Activated CD4-positive, alpha-beta T cell treated with anti-CD3 and anti-CD28 coated beads for 36 hours (primary cell): ENCODE measurements at regions of chr20 and their contacts with region 1.

Region 1: DNA sequence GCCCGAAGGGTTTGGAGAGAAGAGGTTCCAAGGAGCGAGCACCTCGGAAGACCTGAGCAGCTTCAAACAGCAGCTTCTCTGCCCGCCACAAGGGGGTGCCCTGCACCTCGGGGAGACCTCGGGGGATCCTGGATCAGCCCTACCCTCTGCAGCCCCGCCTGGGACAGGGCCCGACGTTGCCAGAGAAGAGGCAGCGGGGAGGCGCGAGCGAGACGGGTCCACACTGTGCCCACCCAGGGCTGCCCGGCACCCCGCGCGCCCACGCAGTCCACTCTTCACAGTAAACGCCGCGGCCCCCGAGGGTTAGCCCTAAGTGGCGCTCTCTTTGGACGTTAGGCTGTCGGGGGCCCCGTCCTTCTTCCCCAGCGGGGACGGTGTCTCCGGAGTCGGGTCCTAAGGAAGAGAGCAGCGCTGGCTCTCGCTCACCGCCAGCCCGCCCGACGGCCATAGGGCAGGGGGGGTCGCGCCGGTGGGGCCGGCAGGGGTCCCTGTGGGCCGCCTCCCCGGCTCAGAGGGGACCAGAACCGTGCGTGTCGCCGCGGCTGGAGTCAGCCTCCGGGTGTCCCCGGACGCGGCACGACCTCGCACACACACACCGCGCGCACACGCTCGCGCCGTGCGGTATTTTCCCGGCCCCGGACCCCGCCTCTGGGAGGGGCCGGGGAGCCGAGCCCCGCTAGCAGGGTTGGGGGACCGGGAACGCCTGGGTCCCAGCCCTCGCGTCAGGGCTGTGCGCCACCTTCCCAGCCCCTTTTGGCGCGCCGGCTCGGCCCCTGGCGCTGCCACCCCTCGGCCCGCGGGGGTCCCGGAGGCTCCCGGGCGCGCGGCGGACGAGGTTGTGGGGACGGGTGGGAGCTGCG is 929 bp downstream of the CDH22 start:
- DNase-seq: peak; percentile 87
- ATAC-seq: peak; percentile 90
- H3K4me3 Mint-ChIP-seq: no peak overlapping the region
- H3K27ac Mint-ChIP-seq: no peak overlapping the region
- H3K4me1 Mint-ChIP-seq: peaks cover 8% of the 10 kb centered on the region
- H3K27me3 Mint-ChIP-seq: peaks cover 61% of the 10 kb centered on the region

Region 2: DNA sequence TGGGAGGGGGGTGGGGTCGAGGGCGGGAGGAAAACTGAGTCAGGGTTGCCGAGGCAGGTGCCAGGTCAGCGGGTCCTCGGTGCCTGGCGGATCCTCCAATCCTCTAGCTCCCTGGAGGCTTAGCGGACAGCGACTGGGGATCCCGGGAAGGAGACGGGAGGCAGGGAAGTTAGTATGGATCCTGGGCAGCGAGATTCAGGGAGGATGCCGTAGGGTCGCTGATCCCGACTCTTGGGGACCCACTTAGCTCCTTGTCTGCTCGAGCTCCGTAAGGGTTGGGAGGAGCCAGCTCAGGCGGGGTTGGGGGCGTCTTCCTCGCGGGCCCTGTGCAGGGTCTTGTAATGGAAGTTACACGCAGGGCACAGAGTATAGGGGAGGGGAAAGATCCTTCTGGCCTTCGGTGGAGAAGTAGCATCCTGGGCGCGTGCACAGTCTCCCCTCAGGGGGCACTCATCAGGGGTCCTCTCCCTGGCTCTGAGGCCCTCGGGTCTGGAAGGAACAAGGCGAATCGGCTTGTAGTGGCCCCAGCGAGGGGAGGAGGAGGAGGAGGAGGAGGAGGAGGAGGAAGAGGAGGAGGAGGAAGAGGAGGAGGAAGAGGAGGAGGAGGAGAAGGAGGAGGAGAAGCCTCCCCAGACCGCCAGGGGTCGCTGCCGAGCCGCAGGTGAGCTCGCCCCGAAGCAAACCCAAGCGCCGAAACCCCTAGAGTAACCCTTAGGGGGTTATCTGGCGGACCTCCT is 284.8 kb before region 1 on chr20:
- CTCF ChIA-PET with region 1: interaction called, 3 read pairs
- POLR2A ChIA-PET with region 1: no interaction called
- intact Hi-C with region 1: loop called in 1 of 2 experiments (anchors 5 kb)
- DNase-seq: peak; percentile 88
- ATAC-seq: peak; percentile 60
- H3K4me3 Mint-ChIP-seq: peak overlapping the region; percentile 57
- H3K27ac Mint-ChIP-seq: no peak overlapping the region
- H3K4me1 Mint-ChIP-seq: peaks cover 17% of the 10 kb centered on the region
- H3K27me3 Mint-ChIP-seq: peaks cover 29% of the 10 kb centered on the region

Region 3: DNA sequence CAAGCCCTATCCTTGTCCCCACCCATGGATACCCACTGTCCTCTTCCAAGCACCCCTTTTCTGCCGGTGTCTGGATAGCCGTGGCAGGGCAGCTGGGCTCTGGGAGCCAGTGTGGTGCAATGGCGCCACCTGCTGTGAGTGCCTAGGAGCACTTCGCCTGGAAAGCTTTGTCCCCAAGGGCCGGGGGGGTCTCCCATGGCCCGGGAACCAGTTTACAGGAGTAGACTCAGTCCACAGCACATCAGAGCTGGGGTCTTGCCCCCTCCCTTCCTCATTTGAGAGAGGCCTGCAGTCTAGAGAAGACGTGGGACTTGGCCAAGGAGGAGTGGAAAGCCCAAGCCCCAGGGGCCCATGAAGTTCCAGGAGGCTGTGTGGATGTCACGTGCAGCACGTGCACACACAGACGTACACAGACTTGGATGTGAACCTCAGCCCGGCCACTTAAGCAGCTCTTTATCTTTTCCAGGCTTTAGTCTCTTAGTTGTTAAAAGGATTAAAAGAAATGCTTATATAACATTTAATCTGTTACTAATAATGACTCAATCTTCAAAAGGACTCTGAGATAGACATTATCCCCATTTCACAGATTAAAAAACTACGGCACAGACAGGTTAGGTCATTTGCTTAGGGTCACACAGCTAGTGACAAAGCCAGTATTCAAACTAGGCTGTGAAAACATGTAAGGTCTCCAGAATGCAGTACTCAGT is 41.8 kb after region 1 on chr20:
- CTCF ChIA-PET with region 1: interaction called, 14 read pairs
- POLR2A ChIA-PET with region 1: no interaction called
- intact Hi-C with region 1: loop called (anchors 1 to 2 kb)
- DNase-seq: peak; percentile 75
- ATAC-seq: peak; percentile 60
- H3K4me3 Mint-ChIP-seq: no peak overlapping the region
- H3K27ac Mint-ChIP-seq: no peak overlapping the region
- H3K4me1 Mint-ChIP-seq: peaks cover 16% of the 10 kb centered on the region
- H3K27me3 Mint-ChIP-seq: no peaks in the 10 kb centered on the region

Region 4: DNA sequence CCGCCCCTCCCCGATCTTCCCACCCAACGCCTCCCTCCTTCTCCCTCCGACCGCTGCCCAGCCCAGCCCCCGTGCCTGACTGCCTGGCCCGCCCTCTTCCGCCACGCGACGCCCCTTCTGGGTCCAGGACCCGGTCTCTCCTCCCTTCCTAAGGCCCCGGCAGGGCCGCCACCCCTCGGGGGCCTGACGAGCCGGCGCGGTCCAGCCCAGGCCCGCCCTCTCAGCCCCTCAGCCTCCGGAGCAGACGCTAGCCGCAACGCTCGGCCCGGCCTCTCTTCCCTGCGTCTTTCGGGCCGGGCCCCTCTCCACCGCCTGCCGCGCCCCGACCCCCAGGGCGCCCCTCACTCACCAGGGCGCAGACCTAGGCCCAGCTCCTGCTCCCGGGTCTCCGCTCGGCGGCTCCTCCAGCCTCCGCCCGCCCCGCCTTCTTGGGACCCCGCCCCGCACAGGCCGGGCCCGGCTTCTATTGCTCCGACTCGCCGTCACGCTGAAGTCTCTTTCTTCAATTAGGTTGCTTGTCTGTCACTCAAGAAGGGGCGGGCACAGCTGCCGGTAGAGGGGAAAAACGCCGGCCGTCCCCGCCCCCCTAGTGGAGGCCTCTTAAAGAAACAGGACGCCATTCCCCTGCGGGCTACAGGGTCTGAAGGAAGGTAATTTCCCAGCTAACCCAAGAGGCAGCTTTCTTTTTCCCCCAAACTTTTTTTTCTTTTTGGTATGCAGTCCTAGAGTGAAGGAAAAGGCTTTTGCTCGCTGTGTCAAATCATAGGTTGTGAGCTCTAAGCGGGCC is 99.0 kb after region 1 on chr20 and contains the start of gene ELMO2:
- CTCF ChIA-PET with region 1: interaction called, 7 read pairs
- POLR2A ChIA-PET with region 1: no interaction called
- intact Hi-C with region 1: loop called (anchors 1 kb)
- DNase-seq: peak; percentile 98
- ATAC-seq: peak; percentile 85
- H3K4me3 Mint-ChIP-seq: peak within 1 kb of the TSS; percentile 88
- H3K27ac Mint-ChIP-seq: peak within 1 kb of the TSS; percentile 85
- H3K4me1 Mint-ChIP-seq: peaks cover 65% of the 10 kb centered on the region
- H3K27me3 Mint-ChIP-seq: no peaks in the 10 kb centered on the region
- total RNA-seq, gene ELMO2: 47.4 to 54.6 TPM

Region 5: DNA sequence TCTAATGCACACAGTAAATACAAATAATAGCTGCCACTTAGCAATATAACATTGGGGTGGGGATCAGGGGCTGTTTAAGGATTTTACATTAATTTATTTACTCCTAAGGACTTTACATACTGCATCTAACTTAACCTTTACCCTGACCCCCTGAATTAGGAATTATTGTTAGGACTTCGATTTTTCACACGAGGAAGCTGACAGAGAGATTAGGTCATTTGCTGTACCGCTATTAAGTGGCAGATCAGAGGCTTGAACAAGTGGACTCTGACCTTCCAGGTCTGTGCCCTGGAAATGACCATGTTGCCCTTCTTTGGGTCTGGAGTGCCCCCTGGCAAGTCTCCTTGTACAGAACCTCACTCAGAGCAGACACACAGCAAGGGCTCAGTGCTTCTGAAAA is 104.3 kb after region 1 on chr20:
- CTCF ChIA-PET with region 1: interaction called, 7 read pairs
- POLR2A ChIA-PET with region 1: no interaction called
- intact Hi-C with region 1: loop called (anchors 1 kb)
- DNase-seq: no peak
- ATAC-seq: no peak
- H3K4me3 Mint-ChIP-seq: no peak overlapping the region
- H3K27ac Mint-ChIP-seq: no peak overlapping the region
- H3K4me1 Mint-ChIP-seq: peaks cover 28% of the 10 kb centered on the region
- H3K27me3 Mint-ChIP-seq: peaks cover 7% of the 10 kb centered on the region

Region 6: DNA sequence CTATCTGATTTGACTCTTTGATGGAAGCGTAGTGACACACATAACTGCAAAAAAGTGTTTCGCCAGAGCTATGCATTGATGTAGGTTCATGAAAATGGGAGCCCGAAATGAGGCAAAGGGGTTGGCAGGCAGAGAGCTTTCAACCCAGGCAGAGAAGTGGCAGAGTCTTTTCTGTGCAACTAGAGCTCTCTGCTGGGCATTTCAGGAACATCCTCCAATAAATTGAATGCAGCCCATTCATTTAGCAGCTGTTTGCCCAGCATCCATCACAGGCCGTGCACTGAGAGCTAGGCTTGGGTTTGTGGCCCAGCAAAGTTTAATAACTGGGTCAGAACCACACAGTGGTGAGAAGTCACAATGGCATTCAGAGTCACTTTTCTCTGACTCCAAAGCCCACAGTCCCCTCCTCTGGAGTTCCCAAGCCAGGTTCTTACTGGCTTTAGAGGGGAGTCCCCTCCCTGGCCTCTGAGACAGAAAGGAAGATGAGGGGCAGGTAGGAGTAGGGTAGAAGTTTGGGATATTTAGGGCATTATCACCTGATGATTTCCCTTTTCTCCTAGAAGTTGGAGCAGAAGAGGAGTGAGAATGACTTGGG is 130.9 kb after region 1 on chr20:
- CTCF ChIA-PET with region 1: interaction called, 19 read pairs
- POLR2A ChIA-PET with region 1: no interaction called
- intact Hi-C with region 1: loop called (anchors 1 kb)
- DNase-seq: peak; percentile 28
- ATAC-seq: peak; percentile 44
- H3K4me3 Mint-ChIP-seq: no peak overlapping the region
- H3K27ac Mint-ChIP-seq: no peak overlapping the region
- H3K4me1 Mint-ChIP-seq: no peaks in the 10 kb centered on the region
- H3K27me3 Mint-ChIP-seq: peaks cover 9% of the 10 kb centered on the region

Region 7: GRCh38 chr20:46681032-46681854 is 373.9 kb after region 1 on chr20:
- CTCF ChIA-PET with region 1: interaction called, 4 read pairs
- POLR2A ChIA-PET with region 1: no interaction called
- intact Hi-C with region 1: loop called (anchors 2 to 5 kb)
- DNase-seq: peak; percentile 83
- ATAC-seq: peak; percentile 80
- H3K4me3 Mint-ChIP-seq: no peak overlapping the region
- H3K27ac Mint-ChIP-seq: no peak overlapping the region
- H3K4me1 Mint-ChIP-seq: peaks cover 29% of the 10 kb centered on the region
- H3K27me3 Mint-ChIP-seq: no peaks in the 10 kb centered on the region